HepG2 (cell line): ENCODE measurements at regions of chr2 and their contacts with region 1.

Region 1: DNA sequence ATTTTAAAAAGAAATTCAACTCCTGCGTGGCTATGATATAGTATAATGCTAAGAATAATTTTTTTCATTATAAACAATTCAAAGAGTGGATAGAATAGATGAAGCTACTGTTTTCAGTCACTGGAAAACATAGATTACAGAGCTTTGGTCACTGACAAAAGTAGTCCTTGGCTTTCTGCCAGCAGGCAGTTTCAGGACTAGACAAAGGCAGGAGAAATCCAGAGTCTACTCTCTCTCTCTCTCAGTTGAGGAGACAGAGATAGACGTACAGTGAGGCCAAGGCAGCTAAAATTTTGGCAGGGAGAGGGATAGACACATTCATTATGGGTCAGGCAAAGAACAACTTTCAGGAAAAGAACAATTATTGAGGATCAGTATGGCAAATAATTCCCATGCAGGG is 491.4 kb upstream of the CRIM1 start:
- DNase-seq: no peak
- ATAC-seq: no peak
- H3K4me3 ChIP-seq: no peak overlapping the region
- H3K27ac ChIP-seq: no peak overlapping the region
- H3K4me1 ChIP-seq: no peaks in the 10 kb centered on the region
- H3K27me3 ChIP-seq: no peaks in the 10 kb centered on the region
- CTCF ChIP-seq: no peak
- EP300 ChIP-seq: no peak
- POLR2A ChIP-seq: no peak
- RAD21 ChIP-seq: no peak

Region 2: GRCh38 chr2:35651688-35652323 is 212.3 kb before region 1 on chr2:
- CTCF ChIA-PET with region 1: no interaction called
- POLR2A ChIA-PET with region 1: no interaction called
- in situ Hi-C with region 1: no loop called
- intact Hi-C with region 1: no loop called
- DNase-seq: peak; percentile 34
- ATAC-seq: peak; percentile 65
- H3K4me3 ChIP-seq: no peak overlapping the region
- H3K27ac ChIP-seq: no peak overlapping the region
- H3K4me1 ChIP-seq: peaks cover 8% of the 10 kb centered on the region; the same call in 1 of the 2 replicates
- H3K27me3 ChIP-seq: no peaks in the 10 kb centered on the region
- CTCF ChIP-seq: no peak
- EP300 ChIP-seq: no peak
- POLR2A ChIP-seq: no peak
- RAD21 ChIP-seq: no peak

Region 3: GRCh38 chr2:35803120-35803519 is 61.0 kb before region 1 on chr2:
- CTCF ChIA-PET with region 1: no interaction called
- POLR2A ChIA-PET with region 1: no interaction called
- in situ Hi-C with region 1: no loop called
- intact Hi-C with region 1: no loop called
- DNase-seq: no peak
- ATAC-seq: no peak
- H3K4me3 ChIP-seq: no peak overlapping the region
- H3K27ac ChIP-seq: no peak overlapping the region
- H3K4me1 ChIP-seq: no peaks in the 10 kb centered on the region
- H3K27me3 ChIP-seq: no peaks in the 10 kb centered on the region
- CTCF ChIP-seq: no peak
- EP300 ChIP-seq: no peak
- POLR2A ChIP-seq: no peak
- RAD21 ChIP-seq: no peak

Region 4: GRCh38 chr2:35830833-35831232 is 33.3 kb before region 1 on chr2:
- CTCF ChIA-PET with region 1: no interaction called
- POLR2A ChIA-PET with region 1: no interaction called
- in situ Hi-C with region 1: no loop called
- intact Hi-C with region 1: no loop called
- DNase-seq: no peak
- ATAC-seq: no peak
- H3K4me3 ChIP-seq: no peak overlapping the region
- H3K27ac ChIP-seq: no peak overlapping the region
- H3K4me1 ChIP-seq: no peaks in the 10 kb centered on the region
- H3K27me3 ChIP-seq: no peaks in the 10 kb centered on the region
- CTCF ChIP-seq: no peak
- EP300 ChIP-seq: no peak
- POLR2A ChIP-seq: no peak
- RAD21 ChIP-seq: no peak

Region 5: DNA sequence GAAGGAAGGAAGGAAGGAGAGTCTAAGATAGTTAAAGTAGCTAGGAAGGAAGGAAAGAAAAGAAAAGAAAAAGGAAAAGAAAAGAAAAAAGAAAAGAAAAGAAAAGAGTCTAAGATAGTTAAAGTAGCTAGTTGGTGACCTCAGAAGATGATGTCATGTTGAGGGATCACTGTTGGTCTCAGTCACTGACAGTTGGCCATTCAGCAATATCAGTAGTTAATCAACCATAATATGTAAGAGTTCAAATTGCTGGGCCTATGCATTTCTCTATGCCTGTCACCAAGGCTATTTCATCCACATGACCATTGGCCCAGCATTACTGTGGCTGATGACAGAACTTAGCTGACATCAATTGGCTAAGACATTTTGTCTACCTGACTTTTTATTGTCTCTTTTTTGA is 55.9 kb after region 1 on chr2:
- CTCF ChIA-PET with region 1: no interaction called
- POLR2A ChIA-PET with region 1: no interaction called
- in situ Hi-C with region 1: no loop called
- intact Hi-C with region 1: loop called (anchors 1 kb)
- DNase-seq: no peak
- ATAC-seq: no peak
- H3K4me3 ChIP-seq: no peak overlapping the region
- H3K27ac ChIP-seq: no peak overlapping the region
- H3K4me1 ChIP-seq: no peaks in the 10 kb centered on the region
- H3K27me3 ChIP-seq: no peaks in the 10 kb centered on the region
- CTCF ChIP-seq: no peak
- EP300 ChIP-seq: no peak
- POLR2A ChIP-seq: no peak
- RAD21 ChIP-seq: no peak